ENCODE measurements at regions of chr15 and their contacts with region 1.

Region 1: GRCh38 chr15:69652751-69653305 is 200.2 kb downstream of the RPLP1 start:
- DNase-seq: peak in 3 of 9 experiments; percentile 30 to 43 (median 31)
- ATAC-seq: no peak
- H3K4me3 ChIP-seq: no peak overlapping the region
- H3K4me3 Mint-ChIP-seq: no peak overlapping the region
- H3K27ac ChIP-seq: no peak overlapping the region
- H3K27ac Mint-ChIP-seq: no peak overlapping the region
- H3K4me1 ChIP-seq: no peaks in the 10 kb centered on the region
- H3K4me1 Mint-ChIP-seq: peaks cover 10% of the 10 kb centered on the region
- H3K27me3 ChIP-seq: no peaks in the 10 kb centered on the region
- H3K27me3 Mint-ChIP-seq: peaks cover 2% of the 10 kb centered on the region
- CTCF ChIP-seq: no peak

Region 2: DNA sequence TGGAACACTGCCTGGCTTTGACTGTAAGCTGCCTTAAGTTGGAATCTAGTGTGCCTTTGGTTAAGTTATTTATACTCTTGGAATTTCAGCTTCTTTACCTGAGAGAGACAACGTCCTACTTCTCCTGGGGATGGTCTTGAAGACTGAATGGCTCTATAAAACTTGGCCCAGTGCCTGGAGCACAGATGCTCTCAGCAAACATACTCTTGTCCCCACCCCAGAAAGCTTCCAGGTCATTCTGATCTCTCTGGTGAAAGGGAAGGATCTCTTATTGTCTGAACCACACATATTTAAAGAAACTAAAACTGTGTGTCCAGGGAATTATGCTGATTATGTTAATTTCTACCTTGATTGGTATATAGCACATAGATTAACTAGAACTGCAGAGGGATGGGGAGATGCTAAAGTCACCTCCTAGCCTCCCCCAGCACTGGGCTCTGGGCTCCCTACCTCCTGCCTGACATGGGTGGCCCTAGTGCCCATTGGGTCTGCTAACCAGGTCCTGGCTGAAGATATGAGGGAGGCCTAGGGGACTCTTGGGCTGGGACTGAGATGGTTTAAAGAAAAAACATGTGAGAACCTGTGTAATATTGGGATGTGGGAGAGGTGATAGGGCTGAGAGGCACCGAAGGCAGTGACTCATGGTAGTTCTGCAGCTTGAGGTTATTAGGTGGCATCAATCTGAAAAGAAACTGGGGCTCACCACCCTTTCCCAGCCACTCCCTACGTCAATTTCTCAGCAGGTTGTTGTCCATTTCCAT is 29.3 kb before region 1 on chr15:
- CTCF ChIA-PET with region 1: no interaction called
- POLR2A ChIA-PET with region 1: no interaction called
- intact Hi-C with region 1: no loop called
- DNase-seq: peak in 2 of 9 experiments; percentile 9 to 38
- ATAC-seq: no peak
- H3K4me3 ChIP-seq: no peak overlapping the region
- H3K4me3 Mint-ChIP-seq: no peak overlapping the region
- H3K27ac ChIP-seq: no peak overlapping the region
- H3K27ac Mint-ChIP-seq: no peak overlapping the region
- H3K4me1 ChIP-seq: no peaks in the 10 kb centered on the region
- H3K4me1 Mint-ChIP-seq: peaks cover 3% of the 10 kb centered on the region
- H3K27me3 ChIP-seq: peaks cover 0 to 3% of the 10 kb centered on the region in 2 experiments
- H3K27me3 Mint-ChIP-seq: peaks cover 2% of the 10 kb centered on the region
- CTCF ChIP-seq: no peak

Region 3: DNA sequence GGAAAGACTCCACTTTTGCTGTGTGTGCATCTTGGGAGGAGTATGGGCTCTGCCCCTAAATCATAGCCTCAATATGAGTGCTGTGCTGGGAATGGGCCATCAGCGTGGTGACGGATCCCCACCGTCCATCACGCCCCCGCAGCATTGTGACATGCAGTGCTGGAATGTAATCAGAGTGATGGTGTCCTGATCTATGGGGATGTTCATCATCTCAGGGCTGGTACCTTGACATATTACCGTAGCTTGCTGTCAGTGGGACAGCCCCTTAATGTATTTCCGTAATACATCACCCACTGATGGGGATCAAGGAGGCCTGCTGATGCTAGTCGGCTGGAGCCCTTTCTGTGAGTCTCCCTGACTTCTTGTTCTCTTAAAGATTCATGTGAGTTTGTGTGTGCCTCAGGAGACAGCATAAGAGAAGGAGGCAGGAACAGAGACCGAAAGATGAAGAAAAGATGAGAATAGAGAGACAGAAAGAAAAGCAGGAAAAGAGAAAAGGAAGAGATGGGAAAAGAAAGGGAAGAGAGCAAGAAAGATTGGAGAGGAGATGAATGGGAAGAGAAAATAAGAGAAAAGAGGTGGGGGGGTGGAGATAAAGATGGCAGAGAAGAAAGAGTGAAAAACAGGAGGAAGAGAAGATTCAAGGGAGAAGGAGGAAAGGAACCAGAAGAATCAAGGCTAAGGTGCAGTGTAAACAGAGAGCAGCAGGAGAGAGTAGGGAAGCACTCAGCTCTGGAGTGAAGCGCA is 16.5 kb before region 1 on chr15:
- CTCF ChIA-PET with region 1: no interaction called
- POLR2A ChIA-PET with region 1: no interaction called
- intact Hi-C with region 1: no loop called
- DNase-seq: no peak
- ATAC-seq: no peak
- H3K4me3 ChIP-seq: no peak overlapping the region
- H3K4me3 Mint-ChIP-seq: no peak overlapping the region
- H3K27ac ChIP-seq: no peak overlapping the region
- H3K27ac Mint-ChIP-seq: no peak overlapping the region
- H3K4me1 ChIP-seq: no peaks in the 10 kb centered on the region
- H3K4me1 Mint-ChIP-seq: no peaks in the 10 kb centered on the region
- H3K27me3 ChIP-seq: no peaks in the 10 kb centered on the region
- H3K27me3 Mint-ChIP-seq: peaks cover 3% of the 10 kb centered on the region
- CTCF ChIP-seq: no peak

Region 4: DNA sequence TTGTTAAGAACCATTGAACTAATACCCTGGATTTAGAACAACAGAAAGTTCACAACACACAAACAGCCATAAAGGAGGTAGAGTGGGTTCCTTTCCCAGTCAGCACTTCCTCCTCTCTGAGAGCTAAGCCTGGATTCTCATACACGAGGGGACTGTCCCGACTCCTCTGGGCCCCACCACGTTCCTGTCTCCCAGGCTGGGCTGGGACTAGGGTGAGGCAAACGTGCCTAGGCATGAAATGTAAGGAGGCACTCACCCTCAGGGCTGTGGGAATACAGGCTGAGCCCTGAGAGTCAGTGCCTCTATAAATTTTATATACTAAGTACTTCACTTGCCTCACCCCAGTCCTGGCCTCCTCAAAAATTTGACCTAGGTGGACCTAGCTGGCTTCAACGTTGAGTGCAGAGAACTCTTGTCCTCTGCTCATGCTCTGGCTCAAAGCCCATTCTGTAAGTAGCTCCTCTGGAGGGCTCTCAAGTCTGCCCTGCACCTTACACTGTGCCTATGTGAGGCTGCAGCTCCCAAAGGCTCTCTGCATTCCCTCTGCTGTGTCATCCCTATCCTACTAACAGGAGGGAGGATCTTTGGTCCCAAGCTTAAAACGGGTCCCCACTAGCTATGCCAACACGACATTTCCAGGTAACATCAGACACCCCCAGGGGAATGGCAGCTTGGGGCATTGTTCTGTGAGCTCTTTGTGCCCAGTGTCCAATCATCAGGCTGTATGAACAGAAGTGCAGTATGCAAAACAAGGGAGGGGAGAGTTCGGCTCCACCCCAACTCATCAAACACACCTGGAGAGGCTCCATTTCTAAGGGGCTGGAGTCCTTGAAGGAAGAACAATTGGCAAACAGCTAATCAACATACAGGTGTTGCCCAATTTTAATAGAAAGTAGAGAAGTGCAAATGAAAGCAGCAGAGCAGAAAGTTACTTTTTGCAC is 33.0 kb after region 1 on chr15:
- CTCF ChIA-PET with region 1: no interaction called
- POLR2A ChIA-PET with region 1: no interaction called
- intact Hi-C with region 1: loop called in 1 of 2 experiments (anchors 2 kb)
- DNase-seq: no peak
- ATAC-seq: no peak
- H3K4me3 ChIP-seq: no peak overlapping the region
- H3K4me3 Mint-ChIP-seq: no peak overlapping the region
- H3K27ac ChIP-seq: no peak overlapping the region
- H3K27ac Mint-ChIP-seq: no peak overlapping the region
- H3K4me1 ChIP-seq: no peaks in the 10 kb centered on the region
- H3K4me1 Mint-ChIP-seq: no peaks in the 10 kb centered on the region
- H3K27me3 ChIP-seq: no peaks in the 10 kb centered on the region
- H3K27me3 Mint-ChIP-seq: no peaks in the 10 kb centered on the region
- CTCF ChIP-seq: no peak